ENCODE measurements at regions of chr18 and their contacts with region 1.

Region 1: GRCh38 chr18:22084547-22084946 is 84.8 kb upstream of the GATA6 start:
- DNase-seq: no peak
- ATAC-seq: no peak
- H3K4me3 Mint-ChIP-seq: no peak overlapping the region
- H3K27ac Mint-ChIP-seq: no peak overlapping the region
- H3K4me1 Mint-ChIP-seq: no peaks in the 10 kb centered on the region
- H3K27me3 Mint-ChIP-seq: no peaks in the 10 kb centered on the region

Region 2: GRCh38 chr18:22052405-22053105 is 32.0 kb before region 1 on chr18:
- CTCF ChIA-PET with region 1: no interaction called
- POLR2A ChIA-PET with region 1: no interaction called
- intact Hi-C with region 1: no loop called
- DNase-seq: no peak
- ATAC-seq: no peak
- H3K4me3 Mint-ChIP-seq: no peak overlapping the region
- H3K27ac Mint-ChIP-seq: no peak overlapping the region
- H3K4me1 Mint-ChIP-seq: no peaks in the 10 kb centered on the region
- H3K27me3 Mint-ChIP-seq: no peaks in the 10 kb centered on the region

Region 3: GRCh38 chr18:22115573-22115972 is 31.0 kb after region 1 on chr18:
- CTCF ChIA-PET with region 1: no interaction called
- POLR2A ChIA-PET with region 1: no interaction called
- intact Hi-C with region 1: no loop called
- DNase-seq: no peak
- ATAC-seq: no peak
- H3K4me3 Mint-ChIP-seq: no peak overlapping the region
- H3K27ac Mint-ChIP-seq: no peak overlapping the region
- H3K4me1 Mint-ChIP-seq: no peaks in the 10 kb centered on the region
- H3K27me3 Mint-ChIP-seq: peaks cover 2% of the 10 kb centered on the region

Region 4: GRCh38 chr18:22141211-22141610 is 56.7 kb after region 1 on chr18:
- CTCF ChIA-PET with region 1: no interaction called
- POLR2A ChIA-PET with region 1: no interaction called
- intact Hi-C with region 1: loop called in 1 of 2 experiments (anchors 10 kb)
- DNase-seq: no peak
- ATAC-seq: no peak
- H3K4me3 Mint-ChIP-seq: no peak overlapping the region
- H3K27ac Mint-ChIP-seq: no peak overlapping the region
- H3K4me1 Mint-ChIP-seq: no peaks in the 10 kb centered on the region
- H3K27me3 Mint-ChIP-seq: no peaks in the 10 kb centered on the region